ENCODE measurements at regions of chr1 and their contacts with region 1.

Region 1: GRCh38 chr1:2412519-2413233 is at the start of gene PEX10:
- DNase-seq: peak; percentile 90 to 98
- H3K4me3 ChIP-seq: peak within 1 kb of the TSS; percentile 87 to 98
- H3K27ac ChIP-seq: peak within 1 kb of the TSS; percentile 79
- H3K4me1 ChIP-seq: peaks cover 12 to 26% of the 10 kb centered on the region in 2 donors
- H3K27me3 ChIP-seq: peaks cover 6% of the 10 kb centered on the region
- CTCF ChIP-seq: no peak
- total RNA-seq, gene PEX10: 26.1 TPM

Region 2: GRCh38 chr1:2290595-2291510 is 121.8 kb before region 1 on chr1:
- intact Hi-C with region 1: no loop called
- DNase-seq: peak; percentile 71 to 96
- H3K4me3 ChIP-seq: peak overlapping the region; percentile 37 to 50
- H3K27ac ChIP-seq: peak overlapping the region; percentile 86 to 89
- H3K4me1 ChIP-seq: peaks cover 38 to 83% of the 10 kb centered on the region in 2 donors
- H3K27me3 ChIP-seq: no peaks in the 10 kb centered on the region
- CTCF ChIP-seq: no peak

Region 3: GRCh38 chr1:2380816-2381591 is 31.7 kb before region 1 on chr1:
- intact Hi-C with region 1: no loop called
- DNase-seq: no peak
- H3K4me3 ChIP-seq: no peak overlapping the region
- H3K27ac ChIP-seq: peak overlapping the region; percentile 32 to 51
- H3K4me1 ChIP-seq: peaks cover 10 to 11% of the 10 kb centered on the region in 2 donors
- H3K27me3 ChIP-seq: no peaks in the 10 kb centered on the region
- CTCF ChIP-seq: no peak

Region 4: GRCh38 chr1:2391041-2391930 is 21.4 kb before region 1 on chr1 and contains the starts of genes MORN1 and RER1:
- intact Hi-C with region 1: loop called (anchors 1 kb)
- DNase-seq: peak; percentile 94 to 99
- H3K4me3 ChIP-seq: peak within 1 kb of the TSS; percentile 81 to 86
- H3K27ac ChIP-seq: peak within 1 kb of the TSS; percentile 84 to 86
- H3K4me1 ChIP-seq: peaks cover 4 to 18% of the 10 kb centered on the region in 2 donors
- H3K27me3 ChIP-seq: no peaks in the 10 kb centered on the region
- CTCF ChIP-seq: no peak
- total RNA-seq, gene MORN1: 18.4 TPM
- total RNA-seq, gene RER1: 61.3 TPM

Region 5: GRCh38 chr1:2545759-2546514 is 133.3 kb after region 1 on chr1:
- intact Hi-C with region 1: loop called (anchors 1 kb)
- DNase-seq: peak; percentile 71 to 91
- H3K4me3 ChIP-seq: peak overlapping the region; percentile 53 to 67
- H3K27ac ChIP-seq: peak overlapping the region; percentile 92 to 95
- H3K4me1 ChIP-seq: peaks cover 13 to 36% of the 10 kb centered on the region in 2 donors
- H3K27me3 ChIP-seq: no peaks in the 10 kb centered on the region
- CTCF ChIP-seq: no peak

Region 6: DNA sequence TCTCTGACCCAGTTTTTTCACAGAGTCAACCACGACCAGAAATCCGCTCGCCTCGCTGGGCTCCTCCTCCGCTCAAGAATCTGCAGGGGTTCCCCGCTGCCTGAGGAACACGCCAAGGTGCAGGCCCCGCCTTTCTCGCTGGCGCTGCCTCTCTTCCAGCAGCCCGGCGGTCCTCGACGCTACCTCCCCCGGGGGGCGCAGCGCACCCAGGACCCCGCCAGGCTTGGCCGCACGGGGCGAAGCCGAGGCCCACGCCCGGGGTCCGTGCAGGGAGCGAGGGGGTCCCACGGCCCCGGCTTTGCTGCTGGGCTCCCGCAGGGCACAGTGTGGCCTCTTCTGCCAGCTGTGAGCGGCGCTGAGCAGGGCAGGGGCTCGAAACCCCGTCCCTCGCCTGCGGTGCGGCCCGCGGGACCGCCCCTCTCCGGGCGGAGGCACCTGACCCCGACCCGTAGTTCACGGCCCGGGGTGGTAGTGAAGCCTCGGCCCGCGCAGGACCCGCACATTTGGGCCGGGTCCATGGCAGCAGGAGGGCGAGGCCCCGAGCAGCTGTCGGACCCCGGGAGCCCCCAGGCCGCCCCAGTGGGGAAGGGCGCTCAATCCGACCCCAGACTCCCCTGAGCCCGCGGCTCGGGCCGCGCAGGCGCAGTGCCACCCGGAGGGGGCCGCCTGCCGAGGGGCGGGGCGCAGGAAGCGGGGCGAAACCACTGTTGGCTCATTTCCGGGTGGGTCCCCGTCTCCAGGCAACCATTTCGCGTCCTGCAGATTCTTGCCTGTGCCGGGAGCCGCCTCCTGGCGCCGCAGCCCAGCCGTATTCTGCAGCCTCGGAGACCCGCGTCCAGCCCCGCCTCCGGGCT is 230.1 kb after region 1 on chr1:
- intact Hi-C with region 1: loop called (anchors 2 kb)
- DNase-seq: peak; percentile 64 to 92
- H3K4me3 ChIP-seq: peak overlapping the region; percentile 74 to 86
- H3K27ac ChIP-seq: peak overlapping the region; percentile 45 to 48
- H3K4me1 ChIP-seq: peaks cover 8 to 18% of the 10 kb centered on the region in 2 donors
- H3K27me3 ChIP-seq: no peaks in the 10 kb centered on the region
- CTCF ChIP-seq: peak in 1 of 3 experiments; percentile 5

Region 7: GRCh38 chr1:3423245-3423829 is 1010.7 kb after region 1 on chr1:
- intact Hi-C with region 1: loop called (anchors 10 kb)
- DNase-seq: peak; percentile 77 to 87
- H3K4me3 ChIP-seq: no peak overlapping the region
- H3K27ac ChIP-seq: peak overlapping the region; percentile 77 to 92
- H3K4me1 ChIP-seq: peaks cover 6 to 43% of the 10 kb centered on the region in 2 donors
- H3K27me3 ChIP-seq: no peaks in the 10 kb centered on the region
- CTCF ChIP-seq: no peak

Region 8: DNA sequence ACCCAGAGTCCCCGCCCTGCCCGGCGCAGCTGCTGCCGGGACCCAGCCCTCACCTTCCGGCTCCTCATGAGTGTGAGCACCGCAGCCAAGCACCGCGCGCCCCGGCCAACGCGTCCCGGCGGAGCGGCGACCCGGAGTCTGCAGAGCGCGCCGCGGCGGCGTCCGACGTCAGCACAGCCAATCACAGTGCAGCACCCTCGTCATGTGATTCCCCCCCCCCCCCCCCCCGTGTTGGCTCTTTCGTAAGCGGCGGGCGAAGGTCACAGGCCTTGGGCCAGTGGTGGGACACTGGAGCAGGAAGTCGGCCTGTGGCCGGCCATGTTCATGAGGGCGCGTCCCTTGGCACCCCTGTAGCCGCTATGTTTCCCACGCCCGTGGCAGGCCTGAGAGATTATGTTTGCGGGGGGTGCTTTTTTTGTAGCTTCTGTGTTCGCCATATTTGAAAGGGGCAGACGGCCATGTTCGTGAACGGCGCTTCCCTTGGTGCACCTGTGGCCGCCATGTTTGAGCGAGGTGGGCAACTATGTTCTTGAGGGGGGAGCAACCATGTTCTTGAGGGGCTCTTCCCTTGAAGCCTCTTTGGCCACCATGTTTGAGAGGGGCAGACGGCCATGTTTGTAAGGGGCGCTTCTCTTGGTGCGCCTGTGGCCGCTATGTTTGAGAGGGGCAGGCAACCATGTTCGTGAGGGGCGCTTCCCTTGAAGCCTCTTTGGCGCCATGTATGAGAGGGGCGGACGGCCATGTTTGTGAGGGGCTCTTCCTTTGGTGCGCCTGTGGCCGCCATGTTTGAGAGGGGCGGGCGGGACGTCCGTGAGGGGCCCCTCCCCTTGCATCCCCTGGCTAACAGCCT is 1487.7 kb after region 1 on chr1 and contains the start of gene C1orf174:
- intact Hi-C with region 1: loop called (anchors 2 kb)
- DNase-seq: peak; percentile 92 to 98
- H3K4me3 ChIP-seq: peak within 1 kb of the TSS; percentile 86 to 95
- H3K27ac ChIP-seq: peak within 1 kb of the TSS; percentile 95 to 98
- H3K4me1 ChIP-seq: peaks cover 3 to 7% of the 10 kb centered on the region in 2 donors
- H3K27me3 ChIP-seq: no peaks in the 10 kb centered on the region
- CTCF ChIP-seq: no peak
- total RNA-seq, gene C1orf174: 14.9 TPM

Measured in ascending aorta (tissue), 2 donors.